Prostate gland (tissue), 2 donors: ENCODE measurements at regions of chr10 and their contacts with region 1.

Region 1: DNA sequence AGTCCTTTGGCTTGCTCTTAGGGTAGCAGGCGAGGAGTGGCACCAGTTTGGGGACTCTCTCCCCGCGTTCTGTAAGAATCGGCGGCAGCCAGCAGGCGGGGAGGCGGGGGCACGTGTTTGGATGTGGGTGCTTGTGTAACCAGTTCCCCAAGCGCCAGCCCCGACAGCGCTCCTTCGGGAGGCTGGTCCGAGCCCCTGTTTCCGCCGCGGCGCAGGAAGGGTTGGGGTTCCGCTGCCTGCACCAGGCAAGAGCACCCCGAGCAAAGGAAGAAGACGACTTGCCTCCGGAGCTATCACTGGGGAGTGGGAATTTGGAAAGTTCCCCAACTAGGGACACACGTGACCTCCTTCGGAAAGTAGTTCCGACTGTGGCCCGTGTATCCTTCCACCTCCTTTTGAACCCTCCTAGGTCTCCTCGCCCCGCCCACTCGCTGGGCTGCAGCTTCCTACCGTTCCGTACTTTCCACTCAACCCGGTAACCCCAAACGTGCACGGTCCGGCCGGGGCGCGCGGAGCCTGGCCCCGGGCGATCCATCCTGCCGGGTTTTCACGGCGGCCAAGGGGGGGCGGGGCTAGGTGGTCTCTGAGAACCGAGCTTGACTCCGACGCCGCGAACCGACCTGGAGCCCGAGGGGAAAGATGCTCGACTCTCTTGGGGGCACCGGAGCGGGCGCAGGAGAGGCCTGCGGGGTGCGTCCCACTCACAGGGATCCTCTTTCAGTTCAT is 1.2 kb downstream of the KLLN start:
- DNase-seq: peak; percentile 94
- H3K4me3 ChIP-seq: peak overlapping the region; percentile 64 to 95
- H3K27ac ChIP-seq: peak overlapping the region; percentile 89 to 97
- H3K4me1 ChIP-seq: no peaks in the 10 kb centered on the region
- H3K27me3 ChIP-seq: no peaks in the 10 kb centered on the region
- CTCF ChIP-seq: peak in 2 of 4 experiments; percentile 9 to 12
- POLR2A ChIP-seq: peak; percentile 58

Region 2: DNA sequence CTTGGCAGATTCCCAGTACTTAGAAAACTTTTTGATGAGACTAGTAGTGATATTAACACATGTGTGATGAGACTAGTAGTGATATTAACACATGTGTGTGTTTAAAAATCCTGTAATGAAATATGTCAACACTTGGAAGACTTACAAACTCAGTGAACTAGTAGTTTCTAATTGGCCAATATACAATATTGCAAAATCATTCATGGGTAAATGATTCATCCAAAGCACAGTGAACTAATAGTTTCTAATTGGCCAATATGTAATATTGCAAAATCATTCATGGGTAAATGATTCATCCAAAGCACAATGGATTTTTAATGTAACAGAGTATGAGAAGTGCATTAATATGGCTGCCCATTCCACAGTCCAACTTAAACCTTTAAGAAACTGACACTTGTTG is 121.9 kb before region 1 on chr10:
- intact Hi-C with region 1: no loop called
- DNase-seq: no peak
- H3K4me3 ChIP-seq: no peak overlapping the region
- H3K27ac ChIP-seq: no peak overlapping the region
- H3K4me1 ChIP-seq: no peaks in the 10 kb centered on the region
- H3K27me3 ChIP-seq: no peaks in the 10 kb centered on the region
- CTCF ChIP-seq: no peak
- POLR2A ChIP-seq: no peak

Region 3: DNA sequence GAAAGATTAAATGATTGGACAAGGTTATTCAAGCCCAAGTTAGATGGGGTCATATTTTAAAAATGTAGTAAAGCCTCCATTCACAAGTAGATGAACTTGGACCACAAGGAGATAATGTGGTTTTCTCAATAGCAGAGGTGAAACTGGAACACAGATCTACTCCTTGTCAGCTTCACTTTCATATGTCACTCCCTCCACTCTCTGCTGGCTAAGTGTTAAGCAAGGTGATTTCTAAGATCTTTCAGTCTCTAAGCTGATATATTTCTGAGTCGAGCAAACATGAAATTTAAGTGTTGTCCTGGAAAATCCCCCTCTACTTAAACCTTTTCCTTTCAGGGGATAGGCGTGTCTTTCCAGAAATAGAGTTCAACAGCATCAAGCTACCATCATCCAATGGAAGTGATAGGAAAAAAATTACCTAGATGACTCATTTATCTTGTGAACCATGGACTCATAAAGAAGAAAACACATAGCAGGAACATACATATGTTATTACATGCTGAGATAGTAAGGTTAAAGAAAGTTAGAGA is 276.3 kb after region 1 on chr10:
- intact Hi-C with region 1: loop called (anchors 10 kb)
- DNase-seq: no peak
- H3K4me3 ChIP-seq: no peak overlapping the region
- H3K27ac ChIP-seq: no peak overlapping the region
- H3K4me1 ChIP-seq: no peaks in the 10 kb centered on the region
- H3K27me3 ChIP-seq: no peaks in the 10 kb centered on the region
- CTCF ChIP-seq: no peak
- POLR2A ChIP-seq: no peak

Region 4: GRCh38 chr10:88245974-88246511 is 383.9 kb after region 1 on chr10:
- intact Hi-C with region 1: loop called (anchors 5 kb)
- DNase-seq: no peak
- H3K4me3 ChIP-seq: no peak overlapping the region
- H3K27ac ChIP-seq: no peak overlapping the region
- H3K4me1 ChIP-seq: no peaks in the 10 kb centered on the region
- H3K27me3 ChIP-seq: no peaks in the 10 kb centered on the region
- CTCF ChIP-seq: no peak
- POLR2A ChIP-seq: no peak

Region 5: DNA sequence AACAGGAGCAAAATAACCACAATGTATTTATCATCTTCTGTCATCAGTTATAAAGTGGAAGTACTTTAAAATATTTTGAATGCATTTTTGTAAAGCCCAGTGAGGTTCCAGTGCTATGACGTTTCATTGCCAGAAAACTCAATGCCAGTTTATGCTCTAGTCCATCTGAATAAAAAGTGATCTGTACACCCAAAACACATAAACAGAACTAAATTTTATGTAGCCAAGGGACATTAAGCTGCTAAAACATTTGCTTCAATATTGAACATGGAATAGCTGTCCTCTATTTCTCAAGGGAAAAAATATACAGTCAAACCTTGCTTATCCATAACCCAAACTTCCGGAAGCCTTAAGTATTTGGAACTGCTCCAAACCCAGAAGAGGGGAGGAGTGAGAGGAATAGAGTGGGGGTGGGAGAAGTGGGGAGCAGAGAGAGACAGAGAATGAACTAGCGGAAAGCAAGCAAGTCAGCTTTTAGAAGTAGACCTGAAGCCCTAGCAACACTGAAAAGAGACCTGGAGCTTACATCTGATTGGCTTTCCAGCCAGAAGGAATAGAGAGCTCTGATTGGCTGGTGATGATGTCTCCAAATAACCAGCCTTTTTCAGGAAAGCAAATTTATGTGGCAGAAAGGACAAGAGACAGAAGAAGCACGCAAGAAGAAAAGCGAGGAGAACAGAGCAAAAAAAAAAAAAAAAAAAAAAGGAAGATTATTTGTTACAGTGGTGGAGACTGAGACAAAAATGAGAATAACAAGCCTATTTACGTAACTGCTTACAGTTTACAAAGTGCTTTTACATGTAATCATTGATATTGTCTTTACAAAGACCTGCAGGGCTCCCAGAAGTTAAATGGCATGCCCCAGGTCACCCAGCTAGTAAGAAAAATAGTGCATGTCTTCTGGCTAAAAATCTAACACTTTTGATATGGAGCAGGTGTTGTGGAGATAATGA is 525.0 kb after region 1 on chr10:
- intact Hi-C with region 1: loop called (anchors 2 kb)
- DNase-seq: no peak
- H3K4me3 ChIP-seq: no peak overlapping the region
- H3K27ac ChIP-seq: peak overlapping the region in 1 of 2 donors; percentile 16
- H3K4me1 ChIP-seq: no peaks in the 10 kb centered on the region
- H3K27me3 ChIP-seq: no peaks in the 10 kb centered on the region
- CTCF ChIP-seq: no peak
- POLR2A ChIP-seq: no peak